ENCODE measurements at regions of chr3 and their contacts with region 1.

Region 1: DNA sequence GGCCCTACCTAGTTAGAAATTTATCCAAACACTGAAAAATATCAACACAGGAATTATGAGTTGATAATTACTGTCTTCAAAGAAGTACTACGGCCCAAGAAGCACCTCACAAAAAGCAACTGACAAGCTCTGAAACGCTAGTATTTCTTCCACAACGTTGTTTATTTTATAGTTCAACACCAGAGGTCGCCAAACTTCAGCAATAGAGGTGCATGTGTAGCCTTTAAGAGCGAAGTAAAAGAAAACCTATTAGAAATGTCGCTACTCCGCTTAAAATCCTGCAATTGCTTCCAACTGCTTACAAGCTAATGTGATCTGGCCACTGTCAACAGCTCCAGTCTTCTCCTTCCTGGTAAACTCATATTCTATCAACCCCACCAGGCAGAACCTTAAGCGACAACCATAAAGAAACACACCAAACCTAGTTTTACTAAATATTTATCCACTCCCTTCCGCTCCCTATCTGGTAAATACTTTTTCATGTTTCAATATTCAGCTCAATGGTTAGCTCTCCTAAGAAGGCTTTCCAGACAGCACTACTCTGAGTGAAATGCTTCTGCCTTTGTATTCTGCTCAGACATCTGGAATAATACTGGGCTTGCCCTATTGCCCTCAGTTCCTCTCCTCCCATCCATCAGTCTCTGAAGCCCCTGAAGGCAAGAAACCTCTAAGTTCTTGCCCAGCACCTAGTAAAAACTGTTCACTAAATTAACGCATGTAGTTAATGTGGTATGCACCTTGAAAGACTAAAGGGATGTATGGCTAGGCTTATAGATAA is 110.2 kb downstream of the NR1I2 start:
- DNase-seq: peak in 3 of 10 donors; percentile 10 to 40 (median 13)

Region 2: DNA sequence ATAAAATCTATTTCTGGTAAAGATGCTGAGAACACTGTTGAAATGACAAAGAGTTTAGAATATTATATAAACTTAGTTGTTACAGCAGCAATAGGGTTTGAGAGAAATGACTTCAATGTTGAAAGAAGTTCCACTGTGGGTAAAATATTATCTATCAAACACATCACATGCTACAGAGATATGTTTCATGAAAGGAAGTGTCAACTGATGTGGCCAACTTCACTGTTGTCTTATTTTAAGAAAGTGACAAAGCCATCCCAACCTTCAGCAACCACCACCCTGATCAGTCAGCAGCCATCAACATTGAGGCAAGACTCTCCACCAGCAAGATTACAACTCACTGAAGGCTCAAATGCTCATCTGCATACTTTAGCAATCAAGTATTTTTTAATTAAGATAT is 449.0 kb before region 1 on chr3:
- intact Hi-C with region 1: no loop called
- DNase-seq: no peak

Region 3: DNA sequence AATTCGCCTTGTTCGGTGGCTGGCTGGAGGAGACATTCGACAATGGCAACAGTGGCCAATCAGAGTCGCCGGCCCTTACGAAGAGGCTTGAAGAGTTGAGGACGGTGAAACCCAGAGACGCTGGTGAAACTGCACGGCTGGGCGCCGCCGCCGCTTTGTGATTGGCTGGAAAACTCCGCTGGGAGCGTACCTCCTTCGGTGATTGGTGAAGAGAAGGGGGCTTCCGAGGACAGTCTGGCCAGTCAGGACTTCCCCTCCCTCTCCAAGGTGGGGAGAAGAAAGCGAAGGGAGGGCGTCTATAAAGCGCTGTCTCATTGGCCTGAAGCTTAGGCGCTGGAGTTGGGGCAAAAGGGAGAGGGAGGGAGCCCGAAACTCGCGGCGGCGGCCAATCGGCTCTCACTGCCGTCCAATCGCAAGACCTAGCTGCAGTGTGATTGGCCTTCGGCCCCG is 202.7 kb after region 1 on chr3:
- intact Hi-C with region 1: loop called (anchors 5 kb)
- DNase-seq: peak; percentile 95 to 100 (median 100)

Region 4: DNA sequence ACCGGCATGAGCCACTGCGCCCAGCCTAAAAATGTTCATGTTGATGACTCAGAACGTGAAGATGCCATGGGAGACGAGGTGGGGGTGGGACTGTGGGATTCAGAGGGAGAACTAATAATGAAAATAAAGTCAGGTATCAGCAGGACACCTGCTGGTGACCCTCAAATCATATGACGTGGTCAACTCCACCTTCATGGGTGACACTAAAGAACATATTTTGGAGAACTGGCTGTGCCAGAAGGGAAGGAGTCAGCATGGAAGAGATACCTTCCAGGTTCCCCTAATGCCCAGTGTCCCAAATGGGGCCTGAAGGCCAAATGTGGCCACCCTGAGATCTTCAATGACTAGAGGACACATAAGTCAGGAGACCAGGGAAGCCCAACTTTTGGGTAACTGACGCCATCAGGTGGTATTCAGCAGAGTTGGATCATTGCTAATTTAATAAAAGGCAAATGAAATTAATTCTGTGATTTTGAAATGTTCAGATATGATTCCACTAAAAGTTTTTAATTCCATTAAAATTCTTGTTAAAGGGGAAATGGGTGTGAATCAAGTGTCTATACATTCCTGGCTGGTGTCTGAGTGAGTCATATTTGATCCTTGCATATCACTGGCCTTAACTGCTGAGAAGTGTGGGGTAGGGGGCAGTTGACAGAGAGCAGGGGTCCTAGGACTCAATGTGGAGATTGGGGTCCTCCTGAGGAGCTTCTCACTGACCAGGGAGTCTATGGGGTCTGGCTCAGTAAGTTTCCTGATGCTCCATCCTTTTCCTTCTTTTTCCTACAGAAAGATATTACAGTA is 290.8 kb after region 1 on chr3:
- intact Hi-C with region 1: loop called (anchors 10 kb)
- DNase-seq: no peak